CD4-positive, alpha-beta T cell (primary cell): ENCODE measurements at regions of chr4 and their contacts with region 1.

Region 1: DNA sequence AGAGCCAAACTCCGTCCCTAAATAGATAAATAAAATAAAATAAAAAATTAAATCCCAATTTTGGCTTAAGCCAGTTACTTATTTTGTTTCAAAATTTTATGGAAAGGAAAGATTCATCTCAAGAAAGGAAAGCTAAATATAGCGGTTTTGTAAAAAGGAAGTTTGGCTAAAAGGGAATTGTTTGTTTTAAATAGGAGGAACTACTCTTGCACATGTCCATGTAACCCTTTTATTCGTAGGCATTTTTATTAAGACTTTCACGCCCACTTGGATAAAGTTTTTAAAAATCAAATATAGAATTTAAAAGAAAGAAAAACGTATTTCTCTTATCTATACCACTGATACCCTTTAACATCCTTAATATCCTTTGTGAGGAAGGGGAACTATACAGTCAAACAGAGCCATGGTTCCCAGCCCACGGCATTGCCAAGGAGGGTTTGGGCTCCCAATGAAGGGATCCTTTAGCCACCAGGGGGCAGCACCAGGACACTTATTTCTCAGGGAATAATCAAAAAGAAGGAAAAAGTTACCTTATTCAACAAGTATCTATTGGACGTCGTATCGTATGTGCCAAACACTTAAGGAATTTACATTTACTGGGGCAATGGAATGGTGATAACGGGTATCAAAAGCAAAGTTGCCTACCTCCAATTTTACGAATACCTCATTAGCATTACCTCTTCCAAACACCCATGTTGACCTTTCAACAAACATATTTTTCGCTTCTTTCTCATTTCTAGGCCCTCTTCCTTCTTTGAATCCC is 27.7 kb downstream of the CDKN2AIP start:
- DNase-seq: peak; percentile 71 to 92 (median 80)
- ATAC-seq: peak; percentile 78
- H3K4me3 ChIP-seq: no peak overlapping the region
- H3K4me3 Mint-ChIP-seq: no peak overlapping the region
- H3K27ac ChIP-seq: no peak overlapping the region
- H3K27ac Mint-ChIP-seq: no peak overlapping the region
- H3K4me1 ChIP-seq: peaks cover 3% of the 10 kb centered on the region
- H3K4me1 Mint-ChIP-seq: peaks cover 6% of the 10 kb centered on the region
- H3K27me3 ChIP-seq: no peaks in the 10 kb centered on the region
- H3K27me3 Mint-ChIP-seq: peaks cover 4% of the 10 kb centered on the region
- CTCF ChIP-seq: peak; percentile 92

Region 2: DNA sequence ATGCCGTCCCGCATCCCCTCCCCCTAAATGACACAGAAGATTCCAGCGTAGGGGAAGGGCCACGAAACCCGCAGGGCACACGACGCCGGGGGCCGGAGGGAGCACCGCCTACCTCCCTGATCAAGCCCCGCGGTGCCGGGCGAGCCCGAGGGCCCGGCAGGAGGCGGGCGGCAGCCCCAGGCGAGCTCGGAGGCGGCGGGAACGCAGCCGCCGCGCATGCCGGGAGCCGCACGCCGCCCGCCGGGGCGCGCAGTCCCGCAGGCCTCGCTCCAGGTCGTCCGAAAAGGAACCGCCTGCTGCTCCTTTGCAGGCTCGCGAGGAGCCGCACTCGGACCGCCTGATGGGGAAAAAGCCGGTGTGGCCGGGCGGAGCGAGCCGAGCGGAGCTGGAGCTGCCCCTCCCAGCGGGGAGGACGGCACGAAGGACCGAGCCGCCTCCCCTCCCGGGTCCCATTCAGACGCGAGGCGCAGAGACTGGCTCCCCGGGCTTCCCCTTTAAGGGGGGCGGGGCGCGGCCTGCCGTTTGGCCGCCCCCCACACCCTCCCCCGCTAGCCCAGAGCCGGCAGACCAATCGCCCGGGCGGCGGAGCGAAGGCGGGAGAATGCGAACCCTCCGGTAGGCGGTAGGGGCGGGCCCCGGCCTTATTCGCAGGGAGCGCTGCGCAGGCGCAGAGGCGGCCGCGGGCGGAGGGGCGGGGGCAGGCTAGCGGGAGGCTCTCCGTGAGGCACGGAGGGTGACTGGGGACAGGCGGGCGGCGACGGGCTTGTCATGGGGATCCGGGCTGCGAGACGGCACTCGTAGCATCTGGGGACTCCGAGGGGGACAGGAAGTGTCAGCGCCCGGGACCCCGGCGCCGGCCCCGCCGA is 32.2 kb after region 1 on chr4:
- CTCF ChIA-PET with region 1: no interaction called
- POLR2A ChIA-PET with region 1: interaction called, 6 read pairs
- intact Hi-C with region 1: loop called (anchors 1 to 5 kb)
- DNase-seq: peak; percentile 98 to 100 (median 99)
- ATAC-seq: peak; percentile 77
- H3K4me3 ChIP-seq: peak overlapping the region; percentile 90
- H3K4me3 Mint-ChIP-seq: peak overlapping the region; percentile 100
- H3K27ac ChIP-seq: peak overlapping the region; percentile 87 to 94
- H3K27ac Mint-ChIP-seq: peak overlapping the region; percentile 97
- H3K4me1 ChIP-seq: peaks cover 14% of the 10 kb centered on the region
- H3K4me1 Mint-ChIP-seq: peaks cover 46% of the 10 kb centered on the region
- H3K27me3 ChIP-seq: no peaks in the 10 kb centered on the region
- H3K27me3 Mint-ChIP-seq: no peaks in the 10 kb centered on the region
- CTCF ChIP-seq: peak; percentile 8

Region 3: GRCh38 chr4:183659029-183659871 is 187.1 kb after region 1 on chr4 and contains the starts of genes RWDD4 and TRAPPC11:
- CTCF ChIA-PET with region 1: no interaction called
- POLR2A ChIA-PET with region 1: no interaction called
- intact Hi-C with region 1: loop called (anchors 1 to 10 kb)
- DNase-seq: peak; percentile 92 to 99 (median 94)
- ATAC-seq: peak; percentile 99
- H3K4me3 ChIP-seq: peak within 1 kb of the TSS; percentile 81
- H3K4me3 Mint-ChIP-seq: peak within 1 kb of the TSS; percentile 94
- H3K27ac ChIP-seq: peak within 1 kb of the TSS; percentile 74 to 79
- H3K27ac Mint-ChIP-seq: peak within 1 kb of the TSS; percentile 93
- H3K4me1 ChIP-seq: peaks cover 24% of the 10 kb centered on the region
- H3K4me1 Mint-ChIP-seq: peaks cover 56% of the 10 kb centered on the region
- H3K27me3 ChIP-seq: no peaks in the 10 kb centered on the region
- H3K27me3 Mint-ChIP-seq: no peaks in the 10 kb centered on the region
- CTCF ChIP-seq: no peak
- total RNA-seq, gene RWDD4: 9.9 to 10.5 TPM
- total RNA-seq, gene TRAPPC11: 14.7 to 19.2 TPM

Region 4: DNA sequence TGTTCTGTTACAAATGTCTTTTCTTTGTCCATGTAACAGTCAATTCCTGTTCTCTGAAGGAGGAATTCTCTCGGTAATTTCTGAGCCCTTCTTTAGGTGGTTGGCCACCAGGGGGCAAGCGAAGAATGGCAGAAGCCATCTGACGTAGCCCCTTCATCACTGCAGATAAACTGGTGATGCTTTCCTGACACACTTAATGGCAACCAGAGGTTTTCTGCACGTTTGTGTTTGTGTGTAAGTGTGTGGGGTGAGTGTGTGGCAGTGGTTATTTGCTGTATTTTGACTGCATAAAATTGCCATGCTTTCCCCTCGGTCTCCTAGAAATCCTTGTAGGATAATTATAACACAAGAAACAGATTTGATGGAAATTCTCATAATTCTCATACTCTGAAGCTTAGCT is 368.2 kb after region 1 on chr4:
- CTCF ChIA-PET with region 1: no interaction called
- POLR2A ChIA-PET with region 1: no interaction called
- intact Hi-C with region 1: loop called in 1 of 2 experiments (anchors 10 kb)
- DNase-seq: peak; percentile 37 to 75 (median 54)
- ATAC-seq: no peak
- H3K4me3 ChIP-seq: no peak overlapping the region
- H3K4me3 Mint-ChIP-seq: no peak overlapping the region
- H3K27ac ChIP-seq: no peak overlapping the region
- H3K27ac Mint-ChIP-seq: no peak overlapping the region
- H3K4me1 ChIP-seq: no peaks in the 10 kb centered on the region
- H3K4me1 Mint-ChIP-seq: no peaks in the 10 kb centered on the region
- H3K27me3 ChIP-seq: peaks cover 0 to 9% of the 10 kb centered on the region in 2 experiments
- H3K27me3 Mint-ChIP-seq: peaks cover 38% of the 10 kb centered on the region
- CTCF ChIP-seq: peak; percentile 82

Region 5: GRCh38 chr4:184168406-184169019 is 696.4 kb after region 1 on chr4:
- CTCF ChIA-PET with region 1: no interaction called
- POLR2A ChIA-PET with region 1: no interaction called
- intact Hi-C with region 1: loop called (anchors 2 to 5 kb)
- DNase-seq: peak in 13 of 14 experiments; percentile 21 to 71 (median 34)
- ATAC-seq: peak; percentile 60
- H3K4me3 ChIP-seq: no peak overlapping the region
- H3K4me3 Mint-ChIP-seq: no peak overlapping the region
- H3K27ac ChIP-seq: no peak overlapping the region
- H3K27ac Mint-ChIP-seq: no peak overlapping the region
- H3K4me1 ChIP-seq: peaks cover 8% of the 10 kb centered on the region
- H3K4me1 Mint-ChIP-seq: no peaks in the 10 kb centered on the region
- H3K27me3 ChIP-seq: peaks cover 26 to 31% of the 10 kb centered on the region in 2 experiments
- H3K27me3 Mint-ChIP-seq: peaks cover 93% of the 10 kb centered on the region
- CTCF ChIP-seq: peak; percentile 80